Activated B cell treated with CpG ODN at 0.5 μM for 24 hours (primary cell): ENCODE measurements at regions of chr12 and their contacts with region 1.

Region 1: GRCh38 chr12:101743724-101744472 is 4.6 kb upstream of the SYCP3 start:
- DNase-seq: peak; percentile 54
- ATAC-seq: peak; percentile 88
- H3K4me3 Mint-ChIP-seq: peak overlapping the region; percentile 36
- H3K27ac Mint-ChIP-seq: peak overlapping the region; percentile 96
- H3K4me1 Mint-ChIP-seq: peaks cover 69% of the 10 kb centered on the region
- H3K27me3 Mint-ChIP-seq: no peaks in the 10 kb centered on the region
- CTCF ChIP-seq: no peak

Region 2: GRCh38 chr12:101670007-101670687 is 73.8 kb before region 1 on chr12:
- CTCF ChIA-PET with region 1: no interaction called
- POLR2A ChIA-PET with region 1: no interaction called
- intact Hi-C with region 1: loop called (anchors 1 kb)
- DNase-seq: no peak
- ATAC-seq: peak; percentile 53
- H3K4me3 Mint-ChIP-seq: no peak overlapping the region
- H3K27ac Mint-ChIP-seq: no peak overlapping the region
- H3K4me1 Mint-ChIP-seq: peaks cover 21% of the 10 kb centered on the region
- H3K27me3 Mint-ChIP-seq: no peaks in the 10 kb centered on the region
- CTCF ChIP-seq: no peak

Region 3: DNA sequence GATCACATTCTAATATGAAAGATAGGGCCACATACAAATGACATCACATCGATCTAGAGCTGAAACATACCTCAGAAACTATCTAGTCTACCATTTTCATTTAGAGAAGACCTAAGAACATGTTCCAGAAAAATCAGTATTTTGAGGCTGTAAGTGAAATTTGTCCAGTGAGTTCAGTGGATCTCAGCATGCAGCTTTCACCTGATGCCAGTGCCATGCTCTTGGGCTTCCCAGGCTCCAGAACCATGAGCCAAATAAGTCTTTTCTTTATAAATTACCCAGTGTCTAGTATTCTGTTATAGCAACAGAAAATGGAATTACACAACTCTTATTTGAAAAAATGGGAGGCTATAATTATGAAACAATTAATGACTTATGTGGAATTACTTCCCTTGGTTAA is 37.5 kb before region 1 on chr12:
- CTCF ChIA-PET with region 1: no interaction called
- POLR2A ChIA-PET with region 1: no interaction called
- intact Hi-C with region 1: no loop called
- DNase-seq: no peak
- ATAC-seq: no peak
- H3K4me3 Mint-ChIP-seq: no peak overlapping the region
- H3K27ac Mint-ChIP-seq: no peak overlapping the region
- H3K4me1 Mint-ChIP-seq: peaks cover 67% of the 10 kb centered on the region
- H3K27me3 Mint-ChIP-seq: no peaks in the 10 kb centered on the region
- CTCF ChIP-seq: no peak

Region 4: DNA sequence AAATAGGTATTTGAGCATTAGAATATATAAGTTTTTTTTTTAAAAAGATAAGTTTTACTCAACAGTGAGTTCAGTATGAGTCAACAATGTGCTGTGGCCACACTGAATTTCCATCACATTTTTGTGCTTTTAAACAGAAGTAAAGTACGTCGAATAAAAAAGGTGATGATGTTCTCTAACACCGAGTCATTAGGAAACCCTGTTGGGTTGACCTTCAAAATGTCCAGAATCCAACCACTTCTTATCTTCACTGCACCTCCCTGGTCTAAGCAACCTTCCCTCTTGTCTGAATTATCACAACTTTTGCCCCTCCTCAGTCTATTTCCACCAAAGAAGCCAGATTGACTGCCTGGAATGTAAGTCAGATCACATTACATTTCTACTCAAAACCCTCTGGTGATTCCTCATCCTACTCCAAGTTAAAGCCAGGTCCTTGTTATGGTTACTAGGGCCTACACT is 38.4 kb after region 1 on chr12:
- CTCF ChIA-PET with region 1: no interaction called
- POLR2A ChIA-PET with region 1: no interaction called
- intact Hi-C with region 1: no loop called
- DNase-seq: no peak
- ATAC-seq: no peak
- H3K4me3 Mint-ChIP-seq: no peak overlapping the region
- H3K27ac Mint-ChIP-seq: no peak overlapping the region
- H3K4me1 Mint-ChIP-seq: peaks cover 19% of the 10 kb centered on the region
- H3K27me3 Mint-ChIP-seq: no peaks in the 10 kb centered on the region
- CTCF ChIP-seq: no peak